Caco-2 (cell line): ENCODE measurements at regions of chr5 and their contacts with region 1.

Region 1: DNA sequence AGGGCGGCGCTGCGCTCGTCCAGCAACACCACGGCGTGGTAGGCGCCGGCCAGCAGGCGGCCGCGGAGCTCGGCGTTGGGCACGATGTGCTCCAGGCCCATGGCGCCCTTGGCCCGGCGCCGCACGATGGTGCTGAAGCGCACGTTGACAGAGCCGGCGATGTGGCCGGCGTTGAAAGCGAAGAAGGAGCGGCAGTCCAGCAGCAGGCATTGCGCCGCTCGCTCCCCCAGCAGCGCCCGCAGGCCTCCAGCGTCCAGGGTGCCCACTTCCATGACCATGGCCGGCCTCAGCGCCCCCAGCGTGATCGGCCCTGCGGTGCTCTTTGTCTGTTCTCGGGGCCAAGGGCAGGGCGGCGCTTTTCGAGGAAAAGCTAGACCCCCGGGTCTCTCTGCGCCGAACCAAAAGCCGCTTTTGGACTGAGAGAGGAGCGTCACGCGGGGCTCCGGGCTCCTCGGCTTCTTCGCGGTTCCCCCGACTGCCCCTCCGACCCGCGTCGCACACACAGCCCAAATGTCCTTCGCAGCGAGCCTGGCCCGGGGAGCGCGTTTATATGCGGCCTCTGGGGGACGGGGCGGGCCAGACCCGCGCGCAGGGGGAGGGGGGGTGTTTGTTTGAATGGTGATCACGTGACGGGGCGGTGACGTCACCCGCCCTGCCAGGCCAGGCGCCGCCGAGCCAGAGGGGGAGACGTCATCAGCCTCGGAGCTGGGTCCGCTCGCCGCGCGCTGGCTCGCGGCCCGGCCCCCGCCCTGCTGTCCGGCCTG is at the start of gene DUSP1:
- DNase-seq: peak; percentile 98
- H3K4me3 ChIP-seq: peak within 1 kb of the TSS; percentile 96
- H3K4me3 Mint-ChIP-seq: peak within 1 kb of the TSS; percentile 89
- H3K27ac Mint-ChIP-seq: peak within 1 kb of the TSS; percentile 96
- H3K4me1 ChIP-seq: peaks cover 48% of the 10 kb centered on the region
- H3K4me1 Mint-ChIP-seq: peaks cover 35% of the 10 kb centered on the region
- H3K27me3 ChIP-seq: no peaks in the 10 kb centered on the region
- H3K27me3 Mint-ChIP-seq: no peaks in the 10 kb centered on the region
- CTCF ChIP-seq: peak; percentile 47 to 53
- total RNA-seq, gene DUSP1: 28.3 and 29.2 TPM in 2 replicates

Region 2: DNA sequence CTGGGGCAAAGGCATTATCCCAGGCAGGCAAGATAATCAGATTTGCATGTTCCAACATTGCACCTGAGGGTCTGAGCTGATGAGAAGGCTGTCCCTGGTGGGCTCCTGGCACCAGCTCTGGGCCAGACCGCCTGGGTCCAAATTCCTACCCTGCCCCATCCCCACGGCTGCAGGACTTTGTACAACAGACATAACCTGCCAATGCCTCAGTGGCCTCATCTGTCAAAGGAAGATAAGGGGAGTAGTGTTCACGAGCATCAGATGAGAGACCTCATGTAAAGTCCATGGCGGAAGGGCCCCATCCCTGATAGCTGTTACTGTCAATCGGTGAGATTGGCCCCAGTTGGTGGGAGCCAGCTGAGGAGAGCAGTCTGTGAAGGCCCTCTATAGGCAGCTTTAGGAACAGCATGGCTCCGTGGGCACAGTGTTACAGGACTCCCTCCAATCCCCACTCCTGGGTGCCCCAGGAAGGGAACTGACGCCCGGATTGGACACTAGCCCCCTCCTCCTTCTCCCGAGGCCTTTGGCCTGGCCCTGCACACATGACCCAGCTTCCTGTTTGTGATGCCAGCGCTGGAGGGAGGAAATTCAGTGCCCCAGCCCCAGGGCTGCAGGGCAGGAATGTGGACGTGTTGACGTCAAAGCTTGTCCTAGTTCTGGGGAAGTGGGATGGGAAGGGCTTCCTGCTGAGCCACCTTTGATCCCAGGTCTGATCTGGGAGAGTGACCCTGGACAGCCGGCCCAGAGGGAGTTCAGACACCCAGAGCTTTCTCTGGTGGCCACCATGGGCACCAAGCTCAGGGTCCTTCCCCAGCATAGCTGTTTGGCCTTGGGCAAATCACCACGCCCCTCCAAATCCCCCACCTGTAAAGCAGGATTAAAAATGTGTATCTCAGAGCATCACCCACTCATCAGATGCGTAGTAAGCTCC is 56.1 kb before region 1 on chr5:
- CTCF ChIA-PET with region 1: interaction called, 31 read pairs
- POLR2A ChIA-PET with region 1: interaction called, 10 read pairs
- intact Hi-C with region 1: loop called (anchors 1 kb)
- DNase-seq: peak; percentile 79 to 80
- H3K4me3 ChIP-seq: no peak overlapping the region
- H3K4me3 Mint-ChIP-seq: no peak overlapping the region
- H3K27ac Mint-ChIP-seq: no peak overlapping the region
- H3K4me1 ChIP-seq: peaks cover 23% of the 10 kb centered on the region
- H3K4me1 Mint-ChIP-seq: peaks cover 6% of the 10 kb centered on the region
- H3K27me3 ChIP-seq: no peaks in the 10 kb centered on the region
- H3K27me3 Mint-ChIP-seq: no peaks in the 10 kb centered on the region
- CTCF ChIP-seq: peak; percentile 84 to 85

Region 3: DNA sequence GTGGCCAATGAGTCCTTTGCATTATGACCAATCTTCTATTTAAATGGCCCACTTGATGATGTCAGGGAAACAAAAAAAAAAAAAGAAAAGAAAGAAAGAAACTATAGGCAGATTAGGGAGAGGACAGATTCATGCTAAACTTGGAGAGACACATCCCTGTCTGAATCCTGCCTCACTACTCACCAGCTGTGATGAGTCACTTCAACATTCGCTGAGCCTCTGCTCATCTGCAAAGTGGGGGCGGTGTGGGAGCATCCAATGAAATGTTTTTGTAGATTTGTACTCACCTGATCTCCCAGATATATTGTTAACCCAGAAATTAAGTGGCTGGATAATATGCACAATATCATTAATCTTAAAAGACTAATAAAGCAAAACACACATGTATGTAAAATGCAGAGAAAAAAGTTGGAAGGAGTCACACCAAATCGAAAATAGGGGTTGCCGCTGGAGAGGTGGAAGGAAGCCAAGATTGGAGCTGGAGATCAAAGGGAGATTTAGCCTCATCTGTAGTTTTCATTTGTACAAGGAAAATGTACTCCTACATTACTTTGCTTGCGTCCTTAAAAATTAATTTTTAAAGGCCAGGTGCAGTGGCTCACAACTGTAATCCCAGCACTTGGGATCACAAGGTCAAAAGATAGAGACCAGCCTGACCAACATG is 46.2 kb after region 1 on chr5:
- CTCF ChIA-PET with region 1: no interaction called
- POLR2A ChIA-PET with region 1: no interaction called
- intact Hi-C with region 1: loop called (anchors 5 kb)
- DNase-seq: no peak
- H3K4me3 ChIP-seq: no peak overlapping the region
- H3K4me3 Mint-ChIP-seq: no peak overlapping the region
- H3K27ac Mint-ChIP-seq: no peak overlapping the region
- H3K4me1 ChIP-seq: no peaks in the 10 kb centered on the region
- H3K4me1 Mint-ChIP-seq: peaks cover 12% of the 10 kb centered on the region
- H3K27me3 ChIP-seq: no peaks in the 10 kb centered on the region
- H3K27me3 Mint-ChIP-seq: no peaks in the 10 kb centered on the region
- CTCF ChIP-seq: no peak

Region 4: GRCh38 chr5:172833686-172834414 is 63.0 kb after region 1 on chr5 and contains the start of gene ERGIC1:
- CTCF ChIA-PET with region 1: interaction called, 9 read pairs
- POLR2A ChIA-PET with region 1: interaction called, 13 read pairs
- intact Hi-C with region 1: loop called (anchors 1 kb)
- DNase-seq: peak; percentile 88 to 90
- H3K4me3 ChIP-seq: peak within 1 kb of the TSS; percentile 86
- H3K4me3 Mint-ChIP-seq: peak within 1 kb of the TSS; percentile 88
- H3K27ac Mint-ChIP-seq: peak within 1 kb of the TSS; percentile 88
- H3K4me1 ChIP-seq: peaks cover 25% of the 10 kb centered on the region
- H3K4me1 Mint-ChIP-seq: peaks cover 21% of the 10 kb centered on the region
- H3K27me3 ChIP-seq: no peaks in the 10 kb centered on the region
- H3K27me3 Mint-ChIP-seq: no peaks in the 10 kb centered on the region
- CTCF ChIP-seq: no peak
- total RNA-seq, gene ERGIC1: 152 and 161 TPM in 2 replicates

Region 5: DNA sequence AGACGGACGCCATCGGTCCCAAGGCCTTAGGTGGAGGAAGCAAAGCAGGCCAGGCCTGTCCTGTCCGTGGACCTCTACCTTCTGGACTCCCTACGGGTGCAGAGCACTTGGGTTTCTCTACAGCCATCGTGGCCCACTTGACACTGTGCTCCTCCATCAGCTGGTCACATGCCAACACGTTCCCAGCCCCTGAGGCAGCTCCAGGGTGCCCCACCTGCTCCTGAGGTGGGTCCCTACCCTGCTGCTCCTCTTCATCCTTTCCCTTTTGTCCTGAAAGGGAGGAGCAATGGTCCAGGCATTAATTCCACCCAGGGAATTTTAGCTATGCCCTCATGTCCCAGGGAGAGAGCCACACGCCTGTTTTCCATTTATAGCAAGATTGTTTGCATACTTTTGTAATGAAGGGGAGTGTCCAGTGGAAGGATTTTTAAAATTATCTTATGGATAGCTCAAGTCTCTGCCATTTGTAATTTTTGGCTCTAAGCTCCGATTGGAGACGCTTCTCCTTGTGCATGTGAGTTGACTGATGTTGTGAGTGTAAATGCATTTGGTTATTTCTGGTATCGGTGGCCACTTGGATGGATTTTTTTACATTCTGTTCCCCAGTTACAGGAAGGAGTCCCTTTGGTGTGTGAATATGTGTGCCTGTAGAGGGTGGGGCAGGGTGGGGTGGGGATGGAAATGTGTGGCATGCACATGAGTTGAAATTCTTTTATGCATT is 181.1 kb after region 1 on chr5:
- CTCF ChIA-PET with region 1: no interaction called
- POLR2A ChIA-PET with region 1: interaction called, 5 read pairs
- intact Hi-C with region 1: loop called (anchors 1 kb)
- DNase-seq: peak in 1 of 2 experiments; percentile 59
- H3K4me3 ChIP-seq: no peak overlapping the region
- H3K4me3 Mint-ChIP-seq: peak overlapping the region; percentile 34
- H3K27ac Mint-ChIP-seq: peak overlapping the region; percentile 76
- H3K4me1 ChIP-seq: peaks cover 25% of the 10 kb centered on the region
- H3K4me1 Mint-ChIP-seq: peaks cover 23% of the 10 kb centered on the region
- H3K27me3 ChIP-seq: no peaks in the 10 kb centered on the region
- H3K27me3 Mint-ChIP-seq: no peaks in the 10 kb centered on the region
- CTCF ChIP-seq: no peak